Mammary epithelial cell (primary cell): ENCODE measurements at regions of chr6 and their contacts with region 1.

Region 1: DNA sequence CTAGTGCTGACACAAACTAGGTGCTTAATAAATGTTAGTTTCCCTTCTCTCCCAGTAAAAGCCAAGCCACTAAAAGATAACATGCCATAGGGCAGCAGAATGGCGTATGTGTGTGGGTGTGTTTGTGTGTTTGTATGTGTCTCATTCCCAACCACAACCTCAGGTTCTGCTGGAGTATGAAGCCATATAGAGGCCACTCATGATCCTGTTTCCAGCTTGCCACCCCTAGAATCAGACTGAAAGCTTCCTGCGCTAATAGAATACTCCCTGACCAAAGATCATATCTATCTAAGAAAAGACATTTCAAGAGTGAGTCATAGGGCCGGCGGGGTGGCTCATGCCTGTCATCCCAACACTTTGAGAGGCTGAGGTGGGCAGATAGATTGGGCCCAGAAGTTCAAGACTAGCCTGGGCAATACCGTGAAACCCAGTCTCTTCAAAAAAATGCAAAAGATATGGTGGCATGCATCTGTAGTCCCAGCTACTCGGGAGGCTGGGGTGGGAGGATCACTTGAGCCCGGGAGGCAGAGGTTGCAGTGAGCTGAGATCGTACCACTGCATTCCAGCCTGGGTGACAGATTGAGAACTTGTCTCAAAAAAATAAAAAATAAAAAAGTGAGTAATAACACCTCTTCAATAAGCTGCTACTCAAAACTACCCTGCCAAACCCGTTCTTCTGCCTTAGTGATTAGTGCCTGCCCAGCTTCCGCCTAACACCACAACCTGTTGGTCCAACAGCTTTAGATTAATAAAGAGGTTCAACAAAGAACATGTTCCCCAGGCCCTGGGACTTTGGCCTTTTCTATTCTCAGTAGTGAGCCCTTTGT is 11.8 kb upstream of the SNRPC start:
- DNase-seq: peak; percentile 79
- H3K4me3 ChIP-seq: no peak overlapping the region
- H3K27ac ChIP-seq: no peak overlapping the region
- H3K4me1 ChIP-seq: peaks cover 6% of the 10 kb centered on the region
- H3K27me3 ChIP-seq: no peaks in the 10 kb centered on the region
- CTCF ChIP-seq: no peak

Region 2: GRCh38 chr6:34656378-34657036 is 89.0 kb before region 1 on chr6:
- CTCF ChIA-PET with region 1: no interaction called
- dilution Hi-C with region 1: loop called (anchors 5 kb)
- in situ Hi-C with region 1: no loop called
- intact Hi-C with region 1: loop called (anchors 10 kb)
- DNase-seq: peak; percentile 30
- H3K4me3 ChIP-seq: peak overlapping the region in 2 of 3 experiments; percentile 45 to 53
- H3K27ac ChIP-seq: peak overlapping the region; percentile 91
- H3K4me1 ChIP-seq: peaks cover 12% of the 10 kb centered on the region
- H3K27me3 ChIP-seq: no peaks in the 10 kb centered on the region
- CTCF ChIP-seq: no peak

Region 3: DNA sequence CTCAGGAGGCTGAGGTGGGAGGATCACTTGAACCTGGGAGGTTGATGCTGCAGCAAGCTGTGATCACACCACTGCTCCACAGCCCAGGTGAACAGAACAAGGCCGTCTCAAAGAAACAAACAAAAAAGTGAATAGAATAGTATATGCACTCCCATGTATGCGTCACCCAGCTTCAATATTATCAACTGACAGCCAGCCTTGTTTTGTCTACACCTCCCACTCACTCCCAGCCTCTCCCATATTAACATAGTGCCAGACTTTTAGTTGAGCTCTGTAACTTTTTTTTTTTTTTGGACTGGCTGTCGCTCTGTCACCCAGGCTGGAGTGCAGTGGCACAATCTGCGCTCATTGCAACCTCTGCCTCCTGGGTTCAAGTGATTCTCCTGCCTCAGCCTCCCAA is 30.8 kb before region 1 on chr6:
- CTCF ChIA-PET with region 1: no interaction called
- dilution Hi-C with region 1: loop called (anchors 5 kb)
- in situ Hi-C with region 1: no loop called
- intact Hi-C with region 1: no loop called
- DNase-seq: no peak
- H3K4me3 ChIP-seq: no peak overlapping the region
- H3K27ac ChIP-seq: no peak overlapping the region
- H3K4me1 ChIP-seq: peaks cover 20% of the 10 kb centered on the region
- H3K27me3 ChIP-seq: no peaks in the 10 kb centered on the region
- CTCF ChIP-seq: no peak